ENCODE measurements at regions of chr4 and their contacts with region 1.

Region 1: DNA sequence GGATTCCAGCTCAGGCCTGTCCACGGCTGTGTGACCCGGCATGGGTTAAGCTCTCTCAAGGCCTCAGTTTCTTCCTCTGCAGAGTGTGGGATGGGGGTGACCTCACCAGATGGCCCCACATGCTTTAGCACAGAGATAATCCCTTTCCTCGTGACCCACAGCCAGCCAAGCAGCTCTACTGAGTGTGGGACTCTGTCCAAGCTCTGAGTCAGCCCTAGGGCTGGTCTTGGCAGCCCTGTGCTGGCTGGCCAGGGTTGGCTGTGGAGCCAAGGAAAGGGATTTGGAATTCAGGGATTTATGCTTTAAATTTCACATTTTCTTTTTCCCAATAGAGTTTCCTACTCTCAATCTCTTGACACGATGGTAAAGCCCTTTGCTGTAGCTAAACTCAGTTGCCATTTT is 19.7 kb upstream of the SPON2 start:
- DNase-seq: peak; percentile 91 to 93
- ATAC-seq: peak; percentile 96 to 97
- H3K4me3 ChIP-seq: no peak overlapping the region
- H3K27ac ChIP-seq: peak overlapping the region; percentile 80 to 83 (median 80)
- H3K4me1 ChIP-seq: peaks cover 23 to 31% of the 10 kb centered on the region in 2 donors
- H3K27me3 ChIP-seq: no peaks in the 10 kb centered on the region
- CTCF ChIP-seq: no peak
- POLR2A ChIP-seq: no peak

Region 2: DNA sequence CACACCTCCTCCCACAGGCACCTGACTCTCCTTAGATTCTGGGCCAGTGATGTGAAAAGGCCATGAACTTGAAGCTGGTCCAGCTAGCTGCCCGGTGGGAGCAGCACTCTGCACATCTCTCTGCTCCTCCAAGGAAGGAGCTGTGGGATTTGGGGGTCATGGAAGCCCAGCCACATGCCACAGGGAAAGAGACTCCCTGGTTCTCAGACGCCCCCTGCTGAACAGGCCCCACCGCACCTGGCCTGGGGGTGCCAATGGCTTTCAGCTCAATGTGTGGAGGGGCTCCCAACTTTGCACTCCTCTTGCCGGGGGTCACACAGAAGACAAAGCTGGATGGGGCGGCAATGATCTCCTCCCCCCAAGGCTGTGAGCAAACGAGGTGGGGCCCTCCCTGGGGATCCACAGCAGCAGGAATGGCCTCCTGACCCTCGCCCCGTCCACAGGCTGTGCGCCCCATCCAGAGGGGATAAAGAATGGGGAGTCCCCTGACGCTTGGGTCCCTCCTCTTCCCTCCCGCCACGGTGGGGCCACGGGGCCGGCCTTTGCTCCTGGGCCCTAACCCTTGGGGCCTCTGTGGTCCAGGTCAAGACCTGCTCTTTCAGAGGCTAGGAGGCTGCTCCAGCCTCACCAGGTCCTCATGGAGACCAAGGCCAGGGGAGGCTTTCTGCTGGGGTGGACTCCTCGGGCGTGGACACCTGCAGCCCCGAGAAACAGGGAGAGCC is 311.2 kb before region 1 on chr4:
- in situ Hi-C with region 1: no loop called
- intact Hi-C with region 1: no loop called
- DNase-seq: no peak
- ATAC-seq: no peak
- H3K4me3 ChIP-seq: no peak overlapping the region
- H3K27ac ChIP-seq: no peak overlapping the region
- H3K4me1 ChIP-seq: no peaks in the 10 kb centered on the region
- H3K27me3 ChIP-seq: no peaks in the 10 kb centered on the region
- CTCF ChIP-seq: no peak
- POLR2A ChIP-seq: no peak

Region 3: DNA sequence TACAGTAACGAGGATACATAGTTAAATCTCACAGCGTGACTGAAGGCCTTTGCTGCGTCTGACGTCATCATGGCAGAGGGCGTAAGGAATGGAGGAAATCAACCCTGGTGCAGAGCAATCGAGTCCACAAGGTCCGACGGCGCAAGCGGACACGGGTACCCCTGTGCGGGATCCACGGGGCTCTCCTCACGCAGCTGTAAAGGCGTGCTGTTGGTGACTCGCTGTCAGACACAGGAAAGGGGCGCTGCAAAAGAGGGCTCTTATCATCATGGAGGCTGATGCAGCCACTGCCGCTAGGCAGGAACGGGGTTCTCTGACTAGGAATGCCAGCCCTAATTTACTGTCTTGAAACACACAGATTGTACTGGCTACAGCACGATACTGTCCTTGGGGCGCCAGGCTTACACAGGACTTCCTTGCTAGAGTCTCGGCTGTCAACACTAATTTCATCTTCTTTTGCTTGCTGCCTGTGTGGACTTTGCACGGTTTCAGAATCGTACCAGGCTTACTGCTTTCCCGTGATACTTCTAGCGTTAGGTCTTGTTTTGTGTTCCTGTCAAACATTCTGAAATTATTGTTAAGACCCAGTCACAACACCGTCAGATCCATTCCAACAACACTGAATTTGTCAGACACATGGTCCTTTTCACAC is 92.3 kb before region 1 on chr4:
- in situ Hi-C with region 1: no loop called
- intact Hi-C with region 1: no loop called
- DNase-seq: no peak
- ATAC-seq: no peak
- H3K4me3 ChIP-seq: no peak overlapping the region
- H3K27ac ChIP-seq: no peak overlapping the region
- H3K4me1 ChIP-seq: no peaks in the 10 kb centered on the region
- H3K27me3 ChIP-seq: no peaks in the 10 kb centered on the region
- CTCF ChIP-seq: no peak
- POLR2A ChIP-seq: no peak

Region 4: DNA sequence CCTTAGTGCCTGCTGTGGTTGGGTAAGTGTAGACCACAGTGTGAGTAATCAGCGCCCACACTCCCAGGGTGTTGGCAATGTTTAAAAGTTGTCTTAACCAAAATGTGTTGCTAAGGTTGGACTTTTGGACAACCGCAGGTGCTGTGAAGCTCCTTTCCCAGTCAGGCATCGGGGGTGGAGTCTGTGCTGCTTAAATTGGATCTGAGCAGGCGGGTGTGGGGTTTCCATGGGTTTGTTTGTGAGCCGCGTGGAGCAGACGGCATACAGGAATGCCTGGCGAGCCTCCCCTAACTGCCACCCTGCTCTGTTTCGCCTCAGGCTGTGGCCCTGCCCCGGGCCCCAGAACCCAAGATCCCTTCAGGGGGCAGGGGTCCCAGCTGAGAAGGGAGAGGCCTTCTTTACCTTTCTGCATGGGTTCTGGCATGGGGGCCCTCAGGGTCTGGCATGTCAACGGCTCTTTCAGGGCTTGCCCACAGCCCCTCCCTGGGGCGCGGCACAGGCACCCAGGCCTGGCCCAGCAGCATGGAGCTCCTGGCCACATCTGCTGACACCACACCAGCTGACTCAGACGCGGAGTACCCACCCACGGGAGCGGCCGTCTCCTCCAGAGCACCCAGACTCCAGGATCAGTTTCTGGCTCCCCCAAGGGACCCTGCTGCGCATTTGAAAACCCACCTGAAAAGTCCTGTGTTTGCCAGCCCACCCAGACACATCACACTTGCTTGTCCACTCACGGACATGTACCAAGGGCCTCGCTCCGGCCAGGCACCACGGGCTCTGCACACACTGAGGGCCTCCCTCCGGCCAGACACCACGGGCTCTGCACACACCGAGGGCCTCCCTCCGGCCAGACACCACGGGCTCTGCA is 14.6 kb before region 1 on chr4:
- in situ Hi-C with region 1: no loop called
- intact Hi-C with region 1: loop called (anchors 1 kb)
- DNase-seq: peak; percentile 79 to 82
- ATAC-seq: peak; percentile 52 to 57
- H3K4me3 ChIP-seq: no peak overlapping the region
- H3K27ac ChIP-seq: peak overlapping the region; percentile 80 to 91 (median 86)
- H3K4me1 ChIP-seq: peaks cover 57 to 60% of the 10 kb centered on the region in 2 donors
- H3K27me3 ChIP-seq: no peaks in the 10 kb centered on the region
- CTCF ChIP-seq: no peak
- POLR2A ChIP-seq: peak; percentile 32 to 48

Region 5: GRCh38 chr4:1300466-1301455 is 108.7 kb after region 1 on chr4:
- in situ Hi-C with region 1: no loop called
- intact Hi-C with region 1: loop called (anchors 1 kb)
- DNase-seq: peak; percentile 54 to 83
- ATAC-seq: peak; percentile 99
- H3K4me3 ChIP-seq: no peak overlapping the region
- H3K27ac ChIP-seq: peak overlapping the region; percentile 55 to 73 (median 63)
- H3K4me1 ChIP-seq: peaks cover 16 to 33% of the 10 kb centered on the region in 2 donors
- H3K27me3 ChIP-seq: no peaks in the 10 kb centered on the region
- CTCF ChIP-seq: no peak
- POLR2A ChIP-seq: no peak

Measured in gastrocnemius medialis (tissue), 4 donors.